IMR-90 (cell line): ENCODE measurements at regions of chr20 and their contacts with region 1.

Region 1: GRCh38 chr20:18524646-18525045 is 16.9 kb downstream of the SEC23B start:
- DNase-seq: peak; percentile 68
- ATAC-seq: peak; percentile 59
- H3K4me3 ChIP-seq: no peak overlapping the region
- H3K27ac ChIP-seq: no peak overlapping the region
- H3K4me1 ChIP-seq: peaks cover 2% of the 10 kb centered on the region
- H3K27me3 ChIP-seq: no peaks in the 10 kb centered on the region
- CTCF ChIP-seq: no peak
- POLR2A ChIP-seq: no peak
- RAD21 ChIP-seq: no peak

Region 2: DNA sequence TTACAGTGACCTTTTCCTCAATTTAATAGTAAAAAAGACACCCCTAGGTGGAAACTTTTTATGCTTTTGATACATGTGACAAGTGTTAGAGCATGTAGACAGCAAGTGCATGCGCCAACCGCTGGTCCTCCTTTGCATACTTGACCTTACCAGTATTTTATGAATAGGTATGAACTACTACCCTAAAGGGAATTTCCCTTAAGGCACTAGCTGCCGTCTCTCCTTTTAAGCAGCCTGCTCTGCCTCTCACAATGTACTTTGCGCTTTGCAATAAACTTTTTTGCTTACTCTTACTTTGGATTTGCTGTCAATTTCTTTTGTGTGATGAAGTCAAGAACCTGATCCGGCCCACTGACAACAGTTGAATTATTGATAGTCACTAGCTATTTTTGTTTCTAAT is 287.0 kb before region 1 on chr20:
- CTCF ChIA-PET with region 1: no interaction called
- POLR2A ChIA-PET with region 1: no interaction called
- dilution Hi-C with region 1: no loop called
- in situ Hi-C with region 1: no loop called
- intact Hi-C with region 1: no loop called
- DNase-seq: no peak
- ATAC-seq: no peak
- H3K4me3 ChIP-seq: no peak overlapping the region
- H3K27ac ChIP-seq: no peak overlapping the region
- H3K4me1 ChIP-seq: no peaks in the 10 kb centered on the region
- H3K27me3 ChIP-seq: no peaks in the 10 kb centered on the region; the same call in 1 of the 2 replicates
- CTCF ChIP-seq: no peak
- POLR2A ChIP-seq: no peak
- RAD21 ChIP-seq: no peak

Region 3: GRCh38 chr20:20037960-20038359 is 1513.3 kb after region 1 on chr20:
- CTCF ChIA-PET with region 1: no interaction called
- POLR2A ChIA-PET with region 1: no interaction called
- dilution Hi-C with region 1: no loop called
- in situ Hi-C with region 1: loop called (anchors 25 kb)
- intact Hi-C with region 1: no loop called
- DNase-seq: peak; percentile 79
- ATAC-seq: peak; percentile 67
- H3K4me3 ChIP-seq: no peak overlapping the region
- H3K27ac ChIP-seq: peak overlapping the region; percentile 58; the same call in 1 of the 2 replicates
- H3K4me1 ChIP-seq: peaks cover 15% of the 10 kb centered on the region
- H3K27me3 ChIP-seq: no peaks in the 10 kb centered on the region
- CTCF ChIP-seq: no peak
- POLR2A ChIP-seq: no peak
- RAD21 ChIP-seq: no peak